HCT116 (cell line): ENCODE measurements at regions of chr9 and their contacts with region 1.

Region 1: DNA sequence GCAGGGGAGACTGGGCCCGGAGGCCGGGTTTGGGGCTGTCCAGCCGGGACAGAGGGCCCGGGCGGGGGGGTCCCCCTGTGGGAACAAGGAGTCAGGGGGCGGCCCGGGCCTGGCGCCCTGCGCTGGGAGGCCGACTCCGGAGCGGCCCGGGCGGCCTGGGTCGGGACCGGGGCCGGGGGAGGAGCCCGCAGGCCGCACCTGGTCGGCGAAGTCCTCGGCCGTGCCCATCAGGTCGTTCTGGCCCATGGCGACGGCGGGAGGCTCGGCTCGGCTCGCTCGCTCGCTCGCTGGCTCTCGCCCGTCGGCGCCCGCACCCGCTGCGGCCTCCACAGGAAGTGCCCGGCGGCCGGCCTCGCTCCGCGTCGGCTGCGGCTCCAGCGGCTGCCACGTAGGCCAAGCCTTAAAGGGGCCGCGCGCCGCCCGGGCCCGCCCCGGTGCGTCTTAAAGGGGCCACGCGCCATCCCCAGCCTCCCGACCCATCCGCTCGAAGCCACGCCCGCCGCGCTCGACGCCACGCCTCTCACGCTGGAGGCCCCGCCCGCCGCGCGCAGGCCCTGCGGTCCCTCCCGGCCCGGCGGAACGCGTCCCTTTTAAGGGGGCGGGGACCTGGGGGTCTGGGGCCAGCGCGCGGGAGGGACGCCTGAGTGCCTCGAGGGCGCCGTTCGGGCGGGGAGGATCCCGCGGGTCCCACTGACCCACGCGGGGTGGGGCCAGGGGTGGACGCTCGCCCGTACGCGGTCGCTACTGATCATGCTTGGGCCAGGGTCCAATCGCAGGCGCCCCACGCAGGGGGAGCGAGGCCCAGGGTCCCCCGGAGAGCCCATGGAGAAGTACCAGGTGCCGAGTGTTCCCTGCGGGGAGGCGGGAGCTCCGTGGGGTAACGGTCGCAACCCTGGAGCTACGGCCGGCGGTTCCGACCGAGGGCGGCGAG is at the starts of genes STKLD1 and SURF4:
- DNase-seq: peak; percentile 90
- ATAC-seq: peak; percentile 93
- H3K4me3 ChIP-seq: peak within 1 kb of the TSS; percentile 59 to 95
- H3K27ac ChIP-seq: peak within 1 kb of the TSS; percentile 91
- H3K4me1 ChIP-seq: peaks cover 21 to 29% of the 10 kb centered on the region in 2 experiments
- H3K27me3 ChIP-seq: no peaks in the 10 kb centered on the region
- CTCF ChIP-seq: no peak
- POLR2A ChIP-seq: peak; percentile 76
- RAD21 ChIP-seq: no peak
- total RNA-seq, gene STKLD1: 0.37 TPM
- total RNA-seq, gene SURF4: 134 TPM

Region 2: GRCh38 chr9:133205996-133206931 is 169.7 kb before region 1 on chr9:
- CTCF ChIA-PET with region 1: no interaction called
- POLR2A ChIA-PET with region 1: no interaction called
- RAD21 ChIA-PET with region 1: no interaction called
- intact Hi-C with region 1: no loop called
- DNase-seq: no peak
- ATAC-seq: no peak
- H3K4me3 ChIP-seq: no peak overlapping the region
- H3K27ac ChIP-seq: no peak overlapping the region
- H3K4me1 ChIP-seq: peaks cover 0 to 13% of the 10 kb centered on the region in 2 experiments; a peak in 1 of 4 replicates
- H3K27me3 ChIP-seq: no peaks in the 10 kb centered on the region
- CTCF ChIP-seq: no peak
- POLR2A ChIP-seq: no peak
- RAD21 ChIP-seq: no peak

Region 3: DNA sequence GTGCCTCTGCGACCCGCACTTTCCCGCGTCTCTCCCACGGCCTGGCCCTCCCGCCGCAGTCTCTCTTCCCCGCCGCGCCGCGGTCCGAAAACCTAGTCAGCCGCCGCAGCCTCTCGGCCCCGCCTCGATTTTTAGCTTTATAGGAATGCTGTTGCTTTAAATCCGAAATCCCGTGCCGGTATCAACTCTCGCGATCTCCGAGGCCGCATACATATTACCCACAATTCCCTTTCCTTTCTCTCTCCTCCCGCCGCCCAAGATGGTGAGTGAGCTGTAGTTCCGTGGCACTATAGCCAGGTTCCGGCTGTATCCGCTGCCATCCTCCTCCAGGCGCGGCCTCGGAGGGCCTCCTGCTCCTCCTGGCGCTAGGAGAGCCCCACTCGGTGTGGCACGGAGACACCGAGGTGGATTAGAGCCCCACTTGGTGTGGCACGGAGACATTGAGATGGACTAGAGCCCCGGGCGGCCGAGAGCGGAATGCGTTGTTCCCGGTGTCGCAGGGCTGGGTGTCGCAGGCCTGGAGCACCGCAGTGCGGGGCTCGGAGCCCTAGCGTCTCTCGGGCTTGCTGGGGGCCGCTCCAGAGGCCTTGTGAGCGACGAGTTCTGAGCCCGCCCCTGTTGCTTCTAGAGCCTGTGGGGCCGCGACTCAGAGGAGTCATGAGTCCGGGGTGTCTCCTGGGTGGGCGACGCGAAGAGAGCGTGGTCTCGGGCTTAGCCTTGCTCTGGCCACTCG is 27.8 kb before region 1 on chr9 and contains the starts of genes MED22 and RPL7A:
- CTCF ChIA-PET with region 1: no interaction called
- POLR2A ChIA-PET with region 1: interaction called, 15 read pairs
- RAD21 ChIA-PET with region 1: no interaction called
- intact Hi-C with region 1: no loop called
- DNase-seq: peak; percentile 93
- ATAC-seq: peak; percentile 65
- H3K4me3 ChIP-seq: peak within 1 kb of the TSS; percentile 89 to 100
- H3K27ac ChIP-seq: peak within 1 kb of the TSS; percentile 96
- H3K4me1 ChIP-seq: peaks cover 12 to 22% of the 10 kb centered on the region in 2 experiments; a peak in 3 of 4 replicates
- H3K27me3 ChIP-seq: no peaks in the 10 kb centered on the region
- CTCF ChIP-seq: no peak
- POLR2A ChIP-seq: peak; percentile 98
- RAD21 ChIP-seq: no peak
- total RNA-seq, gene MED22: 18.6 TPM
- total RNA-seq, gene RPL7A: 2,837 TPM

Region 4: GRCh38 chr9:133726401-133727276 is 350.6 kb after region 1 on chr9:
- CTCF ChIA-PET with region 1: no interaction called
- POLR2A ChIA-PET with region 1: no interaction called
- RAD21 ChIA-PET with region 1: no interaction called
- intact Hi-C with region 1: no loop called
- DNase-seq: peak; percentile 38
- ATAC-seq: peak; percentile 87
- H3K4me3 ChIP-seq: no peak overlapping the region
- H3K27ac ChIP-seq: no peak overlapping the region
- H3K4me1 ChIP-seq: peaks cover 0 to 5% of the 10 kb centered on the region in 2 experiments; a peak in 2 of 4 replicates
- H3K27me3 ChIP-seq: 0 out of 2 replicates have a peak, but pooled peaks cover 12% of the 10 kb centered on the region
- CTCF ChIP-seq: peak; percentile 61 to 76 (median 74)
- POLR2A ChIP-seq: no peak
- RAD21 ChIP-seq: peak; percentile 86